ENCODE measurements at regions of chr2 and their contacts with region 1.

Region 1: DNA sequence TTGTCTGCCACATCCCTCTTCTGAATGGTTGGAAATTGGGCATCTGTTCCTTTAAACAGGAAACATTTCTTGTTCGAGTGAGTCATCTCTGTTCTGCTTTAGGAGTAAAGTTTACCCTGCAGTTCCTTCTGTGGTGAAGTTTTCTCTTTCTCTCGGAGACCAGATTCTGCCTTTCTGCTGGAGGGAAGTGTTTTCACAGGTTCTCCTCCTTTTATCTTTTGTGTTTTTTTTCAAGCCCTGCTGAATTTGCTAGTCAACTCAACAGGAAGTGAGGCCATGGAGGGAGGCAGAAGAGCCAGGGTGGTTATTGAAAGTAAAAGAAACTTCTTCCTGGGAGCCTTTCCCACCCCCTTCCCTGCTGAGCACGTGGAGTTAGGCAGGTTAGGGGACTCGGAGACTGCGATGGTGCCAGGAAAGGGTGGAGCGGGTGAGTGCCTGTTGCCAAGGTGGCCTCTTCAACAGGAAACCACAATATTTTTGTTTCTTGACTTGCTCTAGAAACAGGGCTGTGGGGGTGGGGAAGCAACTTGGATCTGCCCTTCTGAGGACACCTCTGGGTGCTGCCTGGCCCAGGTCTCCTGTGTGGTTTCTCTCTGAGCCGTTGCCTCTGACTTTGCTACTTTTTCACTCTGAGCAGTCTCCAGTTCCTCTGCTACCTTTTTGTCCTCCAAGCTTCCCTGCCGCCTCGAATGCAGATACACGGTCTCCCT is 2.2 kb upstream of the CASP8 start:
- DNase-seq: peak; percentile 72 to 99 (median 98)
- ATAC-seq: peak; percentile 84
- H3K4me3 ChIP-seq: peak overlapping the region; percentile 80
- H3K4me3 Mint-ChIP-seq: peak overlapping the region; percentile 85 to 100 (median 94)
- H3K27ac ChIP-seq: peak overlapping the region; percentile 91
- H3K27ac Mint-ChIP-seq: peak overlapping the region; percentile 95 to 99 (median 98)
- H3K4me1 ChIP-seq: peaks cover 63 to 71% of the 10 kb centered on the region in 2 donors
- H3K4me1 Mint-ChIP-seq: peaks cover 44 to 91% (median 75%) of the 10 kb centered on the region in 7 donors
- H3K27me3 ChIP-seq: no peaks in the 10 kb centered on the region
- H3K27me3 Mint-ChIP-seq: no peaks in the 10 kb centered on the region

Region 2: DNA sequence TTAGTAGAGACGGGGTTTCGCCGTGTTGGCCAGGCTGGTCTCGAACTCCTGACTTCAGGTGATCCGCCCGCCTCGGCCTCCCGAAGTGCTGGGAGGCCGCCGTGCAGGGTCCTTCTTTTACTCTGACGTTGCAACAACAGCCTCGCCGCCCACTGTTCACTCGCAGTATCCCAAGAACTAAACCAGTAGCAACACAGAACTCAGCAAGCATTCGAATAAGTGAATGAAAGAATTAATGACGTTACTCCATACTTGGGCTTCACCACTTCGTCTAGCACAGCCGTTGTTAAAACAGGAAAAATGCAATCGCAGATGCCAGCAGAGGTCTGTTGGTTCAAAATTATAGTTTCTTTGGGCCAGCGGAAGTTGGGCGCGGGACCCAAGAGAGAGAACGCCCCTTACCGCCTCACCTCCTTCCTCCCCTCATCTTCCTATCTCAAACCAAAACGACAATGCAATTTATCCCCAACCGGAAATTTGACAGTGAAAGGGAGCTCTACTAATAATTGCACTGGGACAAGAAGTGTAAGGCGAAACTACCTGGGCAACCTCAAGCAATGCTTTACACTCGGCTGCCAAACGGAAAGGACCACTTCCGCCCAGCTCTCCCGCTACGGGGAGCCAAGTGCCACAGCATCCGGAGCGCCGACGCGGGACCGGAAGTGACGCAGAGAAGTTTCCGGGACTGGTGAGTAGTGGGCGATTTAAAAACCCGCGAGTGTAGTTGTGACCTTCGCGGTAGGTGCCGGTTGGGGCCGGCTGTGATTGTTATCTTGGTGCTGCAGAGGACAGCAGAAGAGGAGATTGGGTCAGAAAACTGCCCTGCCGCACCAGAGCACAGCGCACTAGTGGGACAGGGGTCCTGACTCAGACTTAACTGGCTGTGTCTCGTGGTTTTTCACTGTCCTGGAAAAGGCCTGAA is 369.1 kb before region 1 on chr2 and contains the starts of genes NIF3L1 and PPIL3:
- CTCF ChIA-PET with region 1: no interaction called
- POLR2A ChIA-PET with region 1: interaction called, 8 read pairs
- intact Hi-C with region 1: loop called (anchors 1 kb)
- DNase-seq: peak; percentile 88 to 97 (median 95)
- ATAC-seq: peak; percentile 89
- H3K4me3 ChIP-seq: peak within 1 kb of the TSS; percentile 83
- H3K4me3 Mint-ChIP-seq: peak within 1 kb of the TSS; percentile 88 to 100 (median 96)
- H3K27ac ChIP-seq: peak within 1 kb of the TSS; percentile 86
- H3K27ac Mint-ChIP-seq: peak within 1 kb of the TSS; percentile 97 to 100 (median 100)
- H3K4me1 ChIP-seq: peaks cover 23 to 26% of the 10 kb centered on the region in 2 donors
- H3K4me1 Mint-ChIP-seq: peaks cover 35 to 75% (median 60%) of the 10 kb centered on the region in 7 donors
- H3K27me3 ChIP-seq: no peaks in the 10 kb centered on the region
- H3K27me3 Mint-ChIP-seq: no peaks in the 10 kb centered on the region
- total RNA-seq, gene NIF3L1: 11.5 to 33.9 (median 31.4) TPM
- total RNA-seq, gene PPIL3: 28.5 to 69.7 (median 49.1) TPM

Region 3: DNA sequence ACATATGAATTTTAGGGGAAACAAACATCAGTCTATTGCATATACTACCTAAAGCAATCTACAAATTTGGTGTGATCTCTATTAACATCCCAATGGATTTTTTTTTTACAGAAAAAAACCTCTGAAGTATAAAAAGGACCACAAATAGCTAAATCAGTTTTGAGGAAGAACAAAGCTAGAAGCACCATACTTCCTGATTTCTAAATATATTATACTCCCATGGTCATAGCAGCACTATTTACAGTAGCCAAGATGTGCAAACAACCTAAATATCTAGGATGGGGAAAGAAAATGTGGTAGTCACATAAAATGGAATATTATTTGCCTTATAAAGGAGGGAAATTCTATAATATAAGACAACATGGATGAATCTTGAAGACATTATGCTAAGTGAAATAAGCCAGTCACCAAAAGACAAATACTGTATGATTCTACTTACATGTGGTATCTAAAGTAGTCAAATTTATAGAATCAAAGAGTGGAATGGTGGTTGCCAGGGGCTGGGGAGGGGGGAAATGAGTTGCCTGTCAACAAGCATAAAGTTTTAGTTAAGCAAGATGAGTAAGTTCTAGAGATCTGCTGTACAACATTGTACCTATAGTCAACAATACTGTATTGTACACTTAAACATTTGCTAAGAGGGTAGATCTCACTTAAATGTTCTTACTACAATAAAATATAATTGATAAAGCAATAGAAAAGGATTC is 15.4 kb before region 1 on chr2:
- CTCF ChIA-PET with region 1: interaction called, 16 read pairs
- POLR2A ChIA-PET with region 1: interaction called, 33 read pairs
- intact Hi-C with region 1: no loop called
- DNase-seq: no peak
- ATAC-seq: peak; percentile 24
- H3K4me3 ChIP-seq: no peak overlapping the region
- H3K4me3 Mint-ChIP-seq: no peak overlapping the region
- H3K27ac ChIP-seq: no peak overlapping the region
- H3K27ac Mint-ChIP-seq: peak overlapping the region in 8 of 9 donors; percentile 34 to 95 (median 77)
- H3K4me1 ChIP-seq: peaks cover 3 to 6% of the 10 kb centered on the region in 2 donors
- H3K4me1 Mint-ChIP-seq: peaks cover 39 to 90% (median 71%) of the 10 kb centered on the region in 7 donors
- H3K27me3 ChIP-seq: no peaks in the 10 kb centered on the region
- H3K27me3 Mint-ChIP-seq: no peaks in the 10 kb centered on the region

Region 4: DNA sequence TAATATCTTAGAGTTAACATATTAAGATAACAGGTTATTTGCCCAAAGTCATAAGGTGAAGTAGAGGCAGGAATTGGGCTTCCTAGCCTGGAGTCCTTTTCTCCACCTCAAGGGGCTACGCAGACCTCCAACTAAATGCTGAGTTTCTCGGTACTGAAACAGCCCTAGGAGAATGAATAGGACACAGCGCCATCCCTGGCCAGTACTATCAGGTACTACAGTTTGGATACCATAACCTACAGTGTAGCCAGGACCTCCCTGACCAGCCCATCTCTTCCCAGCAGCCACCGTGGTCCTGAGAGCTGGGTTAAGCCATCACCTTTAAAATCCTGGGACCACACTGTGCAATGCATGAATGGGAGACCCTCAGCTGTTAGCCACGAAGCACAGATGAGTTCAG is 17.9 kb after region 1 on chr2:
- CTCF ChIA-PET with region 1: interaction called, 9 read pairs
- POLR2A ChIA-PET with region 1: interaction called, 33 read pairs
- intact Hi-C with region 1: loop called (anchors 1 kb)
- DNase-seq: no peak
- ATAC-seq: peak; percentile 40
- H3K4me3 ChIP-seq: no peak overlapping the region
- H3K4me3 Mint-ChIP-seq: no peak overlapping the region
- H3K27ac ChIP-seq: no peak overlapping the region
- H3K27ac Mint-ChIP-seq: peak overlapping the region in 8 of 9 donors; percentile 41 to 82 (median 64)
- H3K4me1 ChIP-seq: peaks cover 0 to 22% of the 10 kb centered on the region in 2 donors
- H3K4me1 Mint-ChIP-seq: peaks cover 35 to 73% (median 59%) of the 10 kb centered on the region in 7 donors
- H3K27me3 ChIP-seq: no peaks in the 10 kb centered on the region
- H3K27me3 Mint-ChIP-seq: no peaks in the 10 kb centered on the region

Region 5: DNA sequence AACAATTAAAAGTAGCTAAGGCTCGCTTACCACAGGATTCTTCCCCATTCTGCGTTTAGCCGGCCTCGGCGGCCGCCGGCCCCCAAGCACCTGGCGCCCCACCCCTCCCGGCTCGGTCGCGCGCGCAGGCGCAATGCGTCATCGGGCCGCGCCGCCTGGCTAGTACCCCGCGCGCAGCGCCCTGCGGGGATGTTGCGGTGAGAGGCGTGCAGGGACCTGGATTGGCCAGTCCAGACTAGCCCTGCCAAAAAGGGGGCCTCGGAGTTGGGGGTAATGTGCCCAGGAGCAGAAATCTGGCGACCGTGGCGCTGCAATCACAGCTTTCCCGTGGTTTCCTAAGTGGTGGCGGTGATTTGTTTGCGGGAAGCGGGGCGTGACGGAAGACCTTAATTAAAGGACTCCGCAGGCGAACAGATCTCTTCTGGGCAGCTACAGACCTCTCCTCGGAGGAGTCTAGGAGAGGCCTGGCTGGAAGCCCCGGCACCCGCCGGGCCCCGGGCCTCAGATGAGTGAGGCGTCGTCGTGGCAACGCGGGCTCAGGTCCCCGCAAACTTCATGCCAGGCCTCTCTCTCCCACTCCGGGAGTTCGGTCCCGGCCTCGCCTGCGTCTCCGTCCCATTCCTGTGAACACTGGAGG is 384.6 kb after region 1 on chr2:
- CTCF ChIA-PET with region 1: no interaction called
- POLR2A ChIA-PET with region 1: no interaction called
- intact Hi-C with region 1: loop called in 1 of 2 experiments (anchors 2 kb)
- DNase-seq: peak; percentile 81 to 94 (median 92)
- ATAC-seq: peak; percentile 94
- H3K4me3 ChIP-seq: peak overlapping the region; percentile 95
- H3K4me3 Mint-ChIP-seq: peak overlapping the region; percentile 86 to 99 (median 96)
- H3K27ac ChIP-seq: peak overlapping the region; percentile 87
- H3K27ac Mint-ChIP-seq: peak overlapping the region; percentile 76 to 100 (median 97)
- H3K4me1 ChIP-seq: peaks cover 3 to 5% of the 10 kb centered on the region in 2 donors
- H3K4me1 Mint-ChIP-seq: peaks cover 5 to 21% (median 12%) of the 10 kb centered on the region in 7 donors
- H3K27me3 ChIP-seq: no peaks in the 10 kb centered on the region
- H3K27me3 Mint-ChIP-seq: peaks cover 0 to 4% (median 0%) of the 10 kb centered on the region in 5 donors

Region 6: GRCh38 chr2:202033321-202034248 is 775.5 kb after region 1 on chr2 and contains the start of gene FZD7:
- CTCF ChIA-PET with region 1: no interaction called
- POLR2A ChIA-PET with region 1: interaction called, 3 read pairs
- intact Hi-C with region 1: loop called in 1 of 2 experiments (anchors 2 kb)
- DNase-seq: peak; percentile 70 to 87 (median 81)
- ATAC-seq: peak; percentile 92
- H3K4me3 ChIP-seq: peak within 1 kb of the TSS; percentile 91
- H3K4me3 Mint-ChIP-seq: peak within 1 kb of the TSS in 9 of 10 donors; percentile 87 to 96 (median 92)
- H3K27ac ChIP-seq: peak within 1 kb of the TSS; percentile 44
- H3K27ac Mint-ChIP-seq: peak within 1 kb of the TSS in 8 of 9 donors; percentile 46 to 83 (median 72)
- H3K4me1 ChIP-seq: peaks cover 9 to 11% of the 10 kb centered on the region in 2 donors
- H3K4me1 Mint-ChIP-seq: peaks cover 6 to 17% (median 14%) of the 10 kb centered on the region in 7 donors
- H3K27me3 ChIP-seq: peaks cover 6 to 22% of the 10 kb centered on the region in 2 donors
- H3K27me3 Mint-ChIP-seq: peaks cover 0 to 45% (median 7%) of the 10 kb centered on the region in 5 donors
- total RNA-seq, gene FZD7: 0.27 to 0.99 (median 0.43) TPM

Region 7: GRCh38 chr2:202158796-202159195 is 900.7 kb after region 1 on chr2:
- CTCF ChIA-PET with region 1: no interaction called
- POLR2A ChIA-PET with region 1: no interaction called
- intact Hi-C with region 1: no loop called
- DNase-seq: no peak
- ATAC-seq: no peak
- H3K4me3 ChIP-seq: no peak overlapping the region
- H3K4me3 Mint-ChIP-seq: no peak overlapping the region
- H3K27ac ChIP-seq: no peak overlapping the region
- H3K27ac Mint-ChIP-seq: no peak overlapping the region
- H3K4me1 ChIP-seq: no peaks in the 10 kb centered on the region
- H3K4me1 Mint-ChIP-seq: peaks cover 0 to 3% (median 0%) of the 10 kb centered on the region in 7 donors
- H3K27me3 ChIP-seq: no peaks in the 10 kb centered on the region
- H3K27me3 Mint-ChIP-seq: peaks cover 0 to 11% (median 8%) of the 10 kb centered on the region in 5 donors

Measured in naive thymus-derived CD4-positive, alpha-beta T cell (primary cell).